Naive thymus-derived CD8-positive, alpha-beta T cell (primary cell): ENCODE measurements at regions of chr15 and their contacts with region 1.

Region 1: GRCh38 chr15:52179278-52180195 is 11.7 kb downstream of the GNB5 start:
- DNase-seq: peak; percentile 82 to 94 (median 90)
- ATAC-seq: peak; percentile 80 to 81
- H3K4me3 Mint-ChIP-seq: peak overlapping the region; percentile 88 to 100 (median 95)
- H3K27ac Mint-ChIP-seq: peak overlapping the region; percentile 88 to 99 (median 99)
- H3K4me1 Mint-ChIP-seq: peaks cover 15 to 52% (median 42%) of the 10 kb centered on the region in 4 donors
- H3K27me3 Mint-ChIP-seq: no peaks in the 10 kb centered on the region

Region 2: DNA sequence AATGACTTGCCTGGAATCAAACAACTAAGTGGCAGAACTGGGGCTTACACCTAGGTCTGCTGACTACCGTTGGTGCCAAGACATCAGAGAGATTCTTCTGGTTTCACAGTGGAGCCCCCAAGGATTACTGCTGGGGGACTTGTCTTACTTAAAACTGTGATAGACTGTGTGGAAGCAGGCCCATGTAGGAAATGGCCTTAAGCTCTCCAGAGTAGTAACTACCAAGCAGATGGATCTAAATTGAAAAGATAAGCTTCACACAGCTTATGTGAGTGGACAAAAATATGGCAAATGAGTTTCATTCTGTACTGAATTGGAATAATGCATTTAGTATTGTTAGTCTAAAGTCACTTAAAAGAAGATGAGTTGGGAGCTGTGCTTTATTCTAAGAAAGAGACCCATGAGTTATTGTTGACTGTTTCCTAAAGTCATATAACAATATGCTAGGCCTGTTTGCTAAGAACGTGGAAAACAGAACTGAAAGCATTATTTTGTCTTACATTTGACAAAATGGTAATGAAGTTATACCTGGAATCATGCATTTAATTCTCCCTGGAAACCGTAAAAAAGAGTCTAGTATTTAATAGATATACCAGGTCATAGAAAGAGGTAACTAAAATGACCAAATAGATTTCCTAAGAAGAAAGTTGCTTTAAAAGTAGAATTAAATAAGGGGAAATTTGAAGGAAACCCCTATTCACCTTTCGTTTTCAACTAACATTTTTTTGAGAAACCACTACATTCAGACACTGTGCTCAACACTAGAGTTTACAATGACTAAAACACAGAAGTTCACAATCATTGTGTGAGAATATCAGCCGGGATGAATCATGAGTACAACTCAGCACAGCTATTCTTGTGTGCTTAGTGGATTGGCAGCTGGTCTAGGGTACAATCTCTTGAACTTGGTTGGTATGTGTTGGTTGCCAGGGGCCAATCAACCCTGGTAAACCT is 173.5 kb before region 1 on chr15:
- POLR2A ChIA-PET with region 1: no interaction called
- DNase-seq: no peak
- ATAC-seq: no peak
- H3K4me3 Mint-ChIP-seq: no peak overlapping the region
- H3K27ac Mint-ChIP-seq: no peak overlapping the region
- H3K4me1 Mint-ChIP-seq: peaks cover 5 to 13% (median 12%) of the 10 kb centered on the region in 4 donors
- H3K27me3 Mint-ChIP-seq: no peaks in the 10 kb centered on the region

Region 3: DNA sequence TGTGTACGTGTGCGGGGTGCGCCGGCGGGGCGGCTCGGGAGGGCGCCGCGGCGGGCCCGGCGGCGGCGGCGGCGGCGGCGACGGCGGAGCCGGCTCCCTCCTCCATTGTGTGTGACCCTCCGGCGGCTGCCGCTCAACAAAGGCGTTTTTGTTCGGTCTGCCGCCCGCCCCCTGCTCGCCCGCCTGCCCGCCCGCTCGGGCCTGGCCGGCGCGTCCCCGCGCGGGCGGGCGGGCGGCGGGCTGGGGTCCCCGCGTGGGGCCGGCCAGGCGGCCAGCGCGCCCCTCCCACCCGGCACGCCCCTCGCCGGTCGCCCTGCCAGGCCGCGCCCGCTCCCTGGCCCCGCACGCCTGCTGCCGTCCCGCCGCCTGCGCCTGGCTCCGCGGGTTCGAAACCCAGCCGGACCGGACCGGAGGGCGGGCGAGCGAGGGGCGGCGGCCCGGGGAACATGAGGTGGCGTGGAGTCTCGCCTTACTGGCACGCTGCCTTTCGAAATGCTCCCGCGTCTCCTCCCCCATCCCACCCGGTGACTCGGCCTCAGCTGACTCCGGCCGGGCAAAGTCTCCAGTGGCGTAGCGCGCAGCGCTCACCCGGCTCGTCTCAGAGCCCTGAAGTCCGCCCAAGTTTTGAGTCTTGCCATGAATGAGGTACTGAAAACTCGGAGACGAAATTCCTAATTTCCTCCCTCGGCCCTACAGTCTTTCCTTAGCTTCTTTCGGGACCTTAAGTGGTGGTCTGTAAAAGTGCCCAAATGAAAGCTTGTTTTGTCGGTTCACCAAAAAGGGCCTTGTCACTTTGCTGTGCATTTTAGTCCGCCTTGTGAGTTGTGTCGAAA is 159.9 kb before region 1 on chr15:
- POLR2A ChIA-PET with region 1: interaction called, 13 read pairs
- DNase-seq: peak; percentile 25 to 77 (median 48)
- ATAC-seq: peak; percentile 64 to 68
- H3K4me3 Mint-ChIP-seq: peak overlapping the region; percentile 93 to 99 (median 96)
- H3K27ac Mint-ChIP-seq: peak overlapping the region; percentile 92 to 99 (median 98)
- H3K4me1 Mint-ChIP-seq: peaks cover 11 to 43% (median 36%) of the 10 kb centered on the region in 4 donors
- H3K27me3 Mint-ChIP-seq: no peaks in the 10 kb centered on the region

Region 4: GRCh38 chr15:52134502-52135144 is 44.9 kb before region 1 on chr15:
- POLR2A ChIA-PET with region 1: interaction called, 11 read pairs
- DNase-seq: no peak
- ATAC-seq: no peak
- H3K4me3 Mint-ChIP-seq: no peak overlapping the region
- H3K27ac Mint-ChIP-seq: peak overlapping the region in 6 of 10 donors; percentile 27 to 83 (median 53)
- H3K4me1 Mint-ChIP-seq: peaks cover 13 to 29% (median 26%) of the 10 kb centered on the region in 4 donors
- H3K27me3 Mint-ChIP-seq: no peaks in the 10 kb centered on the region

Region 5: GRCh38 chr15:52193791-52194190 is 14.3 kb after region 1 on chr15:
- POLR2A ChIA-PET with region 1: interaction called, 12 read pairs
- DNase-seq: no peak
- ATAC-seq: no peak
- H3K4me3 Mint-ChIP-seq: no peak overlapping the region
- H3K27ac Mint-ChIP-seq: no peak overlapping the region
- H3K4me1 Mint-ChIP-seq: no peaks in the 10 kb centered on the region
- H3K27me3 Mint-ChIP-seq: no peaks in the 10 kb centered on the region

Region 6: DNA sequence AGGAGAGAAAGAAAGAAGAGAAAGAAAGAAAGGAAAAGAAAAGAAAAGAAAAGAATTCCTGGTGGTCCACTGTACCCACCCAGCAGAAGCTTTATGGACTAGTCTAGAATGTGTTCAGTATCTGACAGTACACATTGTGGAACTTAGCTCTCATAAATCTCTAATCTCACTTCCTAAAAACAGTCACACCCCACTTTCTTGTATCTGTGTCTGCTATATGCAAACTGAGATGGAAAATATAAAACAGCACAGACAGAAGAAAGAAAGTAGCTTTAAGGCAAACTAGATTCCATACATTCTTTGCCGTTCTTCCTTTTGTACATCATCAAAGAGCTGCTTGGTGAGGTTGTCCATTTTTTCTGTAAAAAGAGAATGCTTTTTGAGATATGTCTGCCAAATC is 52.8 kb after region 1 on chr15:
- POLR2A ChIA-PET with region 1: interaction called, 29 read pairs
- DNase-seq: no peak
- ATAC-seq: no peak
- H3K4me3 Mint-ChIP-seq: peak overlapping the region in 3 of 10 donors; percentile 5 to 29 (median 25)
- H3K27ac Mint-ChIP-seq: peak overlapping the region in 8 of 10 donors; percentile 13 to 87 (median 56)
- H3K4me1 Mint-ChIP-seq: peaks cover 16 to 70% (median 42%) of the 10 kb centered on the region in 4 donors
- H3K27me3 Mint-ChIP-seq: no peaks in the 10 kb centered on the region